ENCODE measurements at regions of chr16 and their contacts with region 1.

Region 1: GRCh38 chr16:49876716-49877129 is 20.8 kb upstream of the ZNF423 start:
- DNase-seq: no peak
- H3K4me3 ChIP-seq: no peak overlapping the region
- CTCF ChIP-seq: peak; percentile 84

Region 2: GRCh38 chr16:49857423-49858181 is 19.1 kb before region 1 on chr16:
- CTCF ChIA-PET with region 1: interaction called, 15 read pairs
- POLR2A ChIA-PET with region 1: no interaction called
- DNase-seq: no peak
- H3K4me3 ChIP-seq: peak overlapping the region; percentile 59
- CTCF ChIP-seq: peak; percentile 55

Region 3: DNA sequence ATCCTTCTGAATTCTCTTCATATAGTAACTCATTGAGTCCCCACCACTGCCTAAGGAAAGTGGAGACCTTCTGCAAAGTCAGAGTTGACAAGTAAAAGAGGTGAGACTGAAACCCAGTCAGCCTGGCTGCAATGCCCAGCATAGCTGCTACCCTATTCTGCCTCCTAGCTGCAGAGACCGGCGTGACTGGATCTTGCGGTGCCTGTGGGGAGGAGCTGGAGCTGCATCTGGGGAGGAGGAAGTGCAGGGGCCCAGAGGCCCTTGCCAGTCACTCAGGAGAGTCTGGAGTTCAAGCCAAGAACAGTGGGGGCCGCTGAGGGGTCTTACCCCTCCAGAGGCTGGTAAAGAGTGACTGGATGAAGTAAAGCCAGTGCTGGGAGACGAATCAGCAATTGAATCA is 14.2 kb after region 1 on chr16:
- CTCF ChIA-PET with region 1: interaction called, 11 read pairs
- POLR2A ChIA-PET with region 1: no interaction called
- DNase-seq: no peak
- H3K4me3 ChIP-seq: no peak overlapping the region
- CTCF ChIP-seq: peak; percentile 26

Measured in AG04449 (cell line).